AG04450 (cell line): ENCODE measurements at regions of chr18 and their contacts with region 1.

Region 1: DNA sequence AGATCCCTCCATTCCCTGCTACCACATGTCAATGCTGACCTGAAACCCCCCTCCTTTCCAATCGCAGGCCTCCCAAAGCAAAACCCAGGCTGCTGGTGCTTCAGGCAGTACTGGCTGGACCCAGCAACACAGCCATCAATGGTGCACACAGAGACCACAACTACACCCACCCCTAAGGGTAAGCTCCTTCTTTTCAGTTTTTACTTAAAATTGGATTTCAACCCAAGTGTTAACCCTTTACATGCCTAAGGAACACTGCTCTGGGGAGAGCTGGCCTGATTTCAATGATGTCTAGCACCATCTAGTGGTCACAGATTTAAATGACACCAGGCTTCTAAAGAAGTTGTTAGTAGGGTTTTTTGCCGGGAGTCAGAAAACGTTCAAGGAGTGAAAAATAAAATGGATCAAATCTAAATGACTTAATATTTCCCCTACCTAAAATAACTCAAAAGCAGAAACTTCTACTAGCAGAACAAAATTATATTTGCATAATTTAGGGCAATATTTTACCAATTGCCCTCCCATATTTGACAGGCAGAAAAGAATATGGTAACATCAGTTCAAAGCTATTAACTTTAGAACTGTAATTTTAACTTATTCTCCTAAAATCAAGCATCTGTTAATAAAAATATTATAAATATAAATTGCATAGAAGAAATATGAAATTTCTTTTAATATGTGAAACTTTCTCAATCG is 24.6 kb downstream of the FECH start:
- DNase-seq: no peak
- H3K4me3 ChIP-seq: no peak overlapping the region
- H3K27ac ChIP-seq: no peak overlapping the region
- H3K27me3 ChIP-seq: no peaks in the 10 kb centered on the region
- CTCF ChIP-seq: peak; percentile 75

Region 2: DNA sequence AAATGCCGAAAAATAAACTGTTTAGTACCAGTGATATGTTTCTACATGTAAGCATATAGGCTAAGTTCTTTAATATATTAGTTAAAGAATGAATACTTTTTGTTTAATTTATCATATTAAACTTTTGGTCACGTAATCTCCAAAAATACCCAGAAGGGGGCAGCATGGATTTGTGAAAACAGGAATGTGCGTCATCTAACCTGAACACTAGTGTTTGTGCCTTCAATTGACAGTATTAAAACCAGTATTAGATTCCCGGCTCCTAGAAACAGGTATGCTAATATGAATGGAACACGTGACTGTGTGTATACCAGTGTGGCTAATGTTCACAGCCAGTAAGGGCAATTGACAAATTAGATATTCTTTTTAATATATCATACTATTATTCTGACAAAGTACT is 858.9 kb before region 1 on chr18:
- CTCF ChIA-PET with region 1: interaction called, 32 read pairs
- POLR2A ChIA-PET with region 1: no interaction called
- DNase-seq: no peak
- H3K4me3 ChIP-seq: no peak overlapping the region
- H3K27ac ChIP-seq: no peak overlapping the region
- H3K27me3 ChIP-seq: no peaks in the 10 kb centered on the region
- CTCF ChIP-seq: peak; percentile 63

Region 3: GRCh38 chr18:56748698-56749268 is 813.1 kb before region 1 on chr18:
- CTCF ChIA-PET with region 1: interaction called, 54 read pairs
- POLR2A ChIA-PET with region 1: no interaction called
- DNase-seq: peak; percentile 15
- H3K4me3 ChIP-seq: no peak overlapping the region
- H3K27ac ChIP-seq: no peak overlapping the region
- H3K27me3 ChIP-seq: no peaks in the 10 kb centered on the region
- CTCF ChIP-seq: peak; percentile 66

Region 4: GRCh38 chr18:57301573-57302559 is 260.0 kb before region 1 on chr18:
- CTCF ChIA-PET with region 1: no interaction called
- POLR2A ChIA-PET with region 1: no interaction called
- DNase-seq: no peak
- H3K4me3 ChIP-seq: no peak overlapping the region
- H3K27ac ChIP-seq: no peak overlapping the region
- H3K27me3 ChIP-seq: no peaks in the 10 kb centered on the region
- CTCF ChIP-seq: no peak

Region 5: DNA sequence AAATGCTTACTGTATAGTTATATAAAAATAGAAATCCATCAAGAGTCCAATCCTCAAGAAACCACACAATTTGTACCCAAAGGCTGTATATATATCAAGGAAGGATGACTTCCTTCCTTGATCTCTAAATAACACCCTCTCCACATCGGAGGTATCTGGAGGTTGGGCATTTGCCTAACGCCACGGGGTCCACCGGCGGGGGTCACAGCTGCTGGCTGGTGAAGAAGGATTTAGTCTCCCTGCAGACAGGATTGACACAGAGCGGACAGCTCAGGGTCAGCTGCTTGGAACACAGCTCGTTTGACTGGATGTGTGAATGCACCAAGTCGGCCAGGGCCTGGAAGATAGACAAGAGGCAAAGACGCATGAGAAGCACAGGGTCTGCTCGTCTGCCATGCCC is 11.4 kb before region 1 on chr18:
- CTCF ChIA-PET with region 1: interaction called, 33 read pairs
- POLR2A ChIA-PET with region 1: interaction called, 3 read pairs
- DNase-seq: no peak
- H3K4me3 ChIP-seq: no peak overlapping the region
- H3K27ac ChIP-seq: no peak overlapping the region
- H3K27me3 ChIP-seq: no peaks in the 10 kb centered on the region
- CTCF ChIP-seq: no peak

Region 6: DNA sequence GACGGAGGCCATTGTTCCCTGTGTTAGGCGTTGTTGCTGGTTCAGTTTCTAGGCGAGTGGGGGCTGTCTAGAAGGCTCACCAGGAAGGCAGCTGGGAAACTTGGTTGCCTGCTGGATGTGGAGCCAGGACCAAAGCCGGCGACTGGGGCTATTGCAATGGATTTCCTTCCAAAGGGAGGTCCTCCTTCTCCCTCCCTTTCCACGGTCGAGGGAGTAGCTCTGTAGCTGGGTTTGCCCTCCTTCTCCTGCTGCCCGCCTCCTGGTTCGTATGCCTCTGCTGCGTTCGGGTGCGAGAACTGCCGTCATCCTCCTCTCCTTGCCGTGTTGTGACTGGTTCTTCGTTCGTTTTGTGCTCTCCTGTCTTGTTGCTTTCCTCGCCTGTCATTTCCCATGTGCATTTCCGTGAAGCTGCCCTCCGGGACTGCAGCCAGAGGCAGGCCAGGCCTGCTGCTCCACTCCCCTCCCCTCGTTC is 685.5 kb after region 1 on chr18:
- CTCF ChIA-PET with region 1: no interaction called
- POLR2A ChIA-PET with region 1: no interaction called
- DNase-seq: no peak
- H3K4me3 ChIP-seq: peak overlapping the region; percentile 21; the same call in 1 of the 2 replicates
- H3K27ac ChIP-seq: no peak overlapping the region
- H3K27me3 ChIP-seq: no peaks in the 10 kb centered on the region
- CTCF ChIP-seq: no peak